ENCODE measurements at regions of chr14 and their contacts with region 1.

Region 1: DNA sequence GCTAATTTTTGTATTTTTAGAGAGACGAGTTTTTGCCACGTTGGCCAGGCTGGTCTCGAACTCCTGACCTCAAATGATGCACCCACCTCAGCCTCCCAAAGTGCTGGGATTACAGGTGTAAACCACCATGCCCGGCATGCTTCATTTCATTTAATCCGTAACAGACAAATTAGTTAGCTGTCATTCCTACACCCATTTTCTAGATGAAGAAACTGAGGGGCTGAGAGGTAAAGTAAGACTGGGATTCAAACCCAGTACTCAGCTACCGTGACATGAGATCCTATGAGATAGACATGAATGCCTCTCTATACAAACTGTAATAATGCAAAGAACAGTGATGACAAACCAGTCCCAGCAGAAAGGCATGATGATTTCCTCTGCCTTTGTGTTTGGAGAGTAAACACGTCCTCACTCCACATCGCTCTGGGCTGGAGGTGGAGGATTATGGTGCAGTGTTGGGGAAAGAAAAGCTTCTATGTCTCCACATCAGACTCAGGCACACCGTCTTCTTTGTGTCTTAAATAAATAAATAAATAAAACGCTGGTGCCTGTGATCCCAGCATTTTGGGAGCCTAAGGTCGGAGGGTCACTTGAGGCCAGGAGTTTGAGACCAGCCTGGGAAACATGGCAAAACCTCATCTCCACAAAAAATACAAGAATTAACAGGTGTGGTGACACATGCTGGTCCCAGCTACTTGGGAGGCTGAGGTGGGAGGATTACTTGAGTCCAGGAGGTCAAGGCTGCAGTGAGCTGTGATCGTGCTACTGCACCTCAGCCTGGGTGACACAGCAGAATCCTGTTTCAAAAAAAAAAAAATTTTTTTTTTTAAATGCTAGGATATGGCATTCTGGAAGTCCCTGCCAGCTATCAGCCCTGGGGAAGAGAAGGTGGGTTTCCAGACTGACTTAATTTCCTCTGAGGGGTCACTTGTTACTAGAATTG is 10.5 kb downstream of the VSX2 start:
- DNase-seq: no peak
- H3K4me3 Mint-ChIP-seq: no peak overlapping the region
- H3K27ac Mint-ChIP-seq: no peak overlapping the region
- H3K4me1 Mint-ChIP-seq: peaks cover 6% of the 10 kb centered on the region
- H3K27me3 Mint-ChIP-seq: peaks cover 45% of the 10 kb centered on the region

Region 2: GRCh38 chr14:74109369-74109768 is 140.3 kb before region 1 on chr14:
- intact Hi-C with region 1: loop called (anchors 1 kb)
- DNase-seq: no peak
- H3K4me3 Mint-ChIP-seq: no peak overlapping the region
- H3K27ac Mint-ChIP-seq: no peak overlapping the region
- H3K4me1 Mint-ChIP-seq: peaks cover 3% of the 10 kb centered on the region
- H3K27me3 Mint-ChIP-seq: no peaks in the 10 kb centered on the region